ENCODE measurements at regions of chr14 and their contacts with region 1.

Region 1: GRCh38 chr14:75132382-75133086 is 5.7 kb upstream of the NEK9 start:
- DNase-seq: peak; percentile 71
- H3K4me3 ChIP-seq: no peak overlapping the region
- H3K27ac ChIP-seq: peak overlapping the region; percentile 20
- H3K4me1 ChIP-seq: peaks cover 16% of the 10 kb centered on the region
- H3K27me3 ChIP-seq: no peaks in the 10 kb centered on the region
- CTCF ChIP-seq: peak; percentile 69 to 71

Region 2: GRCh38 chr14:74875941-74876913 is 256.3 kb before region 1 on chr14 and contains the start of gene PROX2:
- CTCF ChIA-PET with region 1: no interaction called
- dilution Hi-C with region 1: no loop called
- in situ Hi-C with region 1: no loop called
- intact Hi-C with region 1: no loop called
- DNase-seq: no peak
- H3K4me3 ChIP-seq: no peak within 1 kb of the TSS
- H3K27ac ChIP-seq: no peak within 1 kb of the TSS
- H3K4me1 ChIP-seq: peaks cover 5% of the 10 kb centered on the region
- H3K27me3 ChIP-seq: no peaks in the 10 kb centered on the region
- CTCF ChIP-seq: no peak
- total RNA-seq, gene PROX2: not detected

Region 3: GRCh38 chr14:75119056-75119455 is 13.5 kb before region 1 on chr14:
- CTCF ChIA-PET with region 1: no interaction called
- dilution Hi-C with region 1: no loop called
- in situ Hi-C with region 1: no loop called
- intact Hi-C with region 1: no loop called
- DNase-seq: no peak
- H3K4me3 ChIP-seq: no peak overlapping the region
- H3K27ac ChIP-seq: no peak overlapping the region
- H3K4me1 ChIP-seq: peaks cover 4% of the 10 kb centered on the region
- H3K27me3 ChIP-seq: no peaks in the 10 kb centered on the region
- CTCF ChIP-seq: no peak

Region 4: DNA sequence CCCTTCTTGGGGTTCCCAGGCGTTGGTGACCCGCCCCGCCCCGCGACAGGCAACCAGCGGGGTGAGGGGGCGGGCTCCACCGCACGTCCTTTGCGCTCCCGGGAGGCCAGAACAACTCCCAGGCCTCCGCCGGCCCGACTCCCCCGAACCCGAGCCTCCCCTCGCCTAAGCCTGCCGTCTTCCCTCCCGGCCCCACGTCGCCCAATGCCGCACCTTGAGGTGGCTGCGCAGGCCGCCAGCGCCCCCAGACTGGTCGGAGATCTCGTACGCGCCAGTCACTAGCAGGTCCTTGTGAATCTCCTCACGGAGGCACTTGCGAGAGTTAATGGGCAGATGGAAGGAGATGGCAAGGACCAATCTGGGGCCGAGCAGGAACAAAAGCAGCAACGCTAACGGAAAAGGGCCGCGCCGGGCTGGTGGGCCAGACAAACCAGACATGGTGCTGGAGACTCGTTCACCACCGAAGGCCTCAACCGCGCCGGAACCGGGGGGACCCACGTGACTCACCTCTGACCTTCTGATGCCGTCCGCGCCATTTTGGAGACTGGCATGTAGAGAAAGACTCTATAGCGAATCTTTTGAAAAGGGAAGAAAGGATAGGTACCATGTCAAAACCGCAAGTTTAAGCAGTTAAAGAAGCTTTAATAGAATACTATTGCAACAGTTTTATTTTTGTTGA is 43.7 kb after region 1 on chr14 and contains the start of gene TMED10:
- CTCF ChIA-PET with region 1: no interaction called
- dilution Hi-C with region 1: no loop called
- in situ Hi-C with region 1: no loop called
- intact Hi-C with region 1: loop called (anchors 5 kb)
- DNase-seq: peak; percentile 84
- H3K4me3 ChIP-seq: peak within 1 kb of the TSS; percentile 60 to 87 (median 80)
- H3K27ac ChIP-seq: peak within 1 kb of the TSS; percentile 98
- H3K4me1 ChIP-seq: peaks cover 13% of the 10 kb centered on the region
- H3K27me3 ChIP-seq: no peaks in the 10 kb centered on the region
- CTCF ChIP-seq: no peak
- total RNA-seq, gene TMED10: 389 to 397 TPM

Region 5: GRCh38 chr14:75258615-75259466 is 126.3 kb after region 1 on chr14:
- CTCF ChIA-PET with region 1: interaction called, 3 read pairs
- dilution Hi-C with region 1: no loop called
- in situ Hi-C with region 1: no loop called
- intact Hi-C with region 1: loop called (anchors 1 kb)
- DNase-seq: peak; percentile 100
- H3K4me3 ChIP-seq: peak overlapping the region; percentile 0 to 37 (median 27)
- H3K27ac ChIP-seq: peak overlapping the region; percentile 97
- H3K4me1 ChIP-seq: peaks cover 52% of the 10 kb centered on the region
- H3K27me3 ChIP-seq: no peaks in the 10 kb centered on the region
- CTCF ChIP-seq: no peak

Region 6: DNA sequence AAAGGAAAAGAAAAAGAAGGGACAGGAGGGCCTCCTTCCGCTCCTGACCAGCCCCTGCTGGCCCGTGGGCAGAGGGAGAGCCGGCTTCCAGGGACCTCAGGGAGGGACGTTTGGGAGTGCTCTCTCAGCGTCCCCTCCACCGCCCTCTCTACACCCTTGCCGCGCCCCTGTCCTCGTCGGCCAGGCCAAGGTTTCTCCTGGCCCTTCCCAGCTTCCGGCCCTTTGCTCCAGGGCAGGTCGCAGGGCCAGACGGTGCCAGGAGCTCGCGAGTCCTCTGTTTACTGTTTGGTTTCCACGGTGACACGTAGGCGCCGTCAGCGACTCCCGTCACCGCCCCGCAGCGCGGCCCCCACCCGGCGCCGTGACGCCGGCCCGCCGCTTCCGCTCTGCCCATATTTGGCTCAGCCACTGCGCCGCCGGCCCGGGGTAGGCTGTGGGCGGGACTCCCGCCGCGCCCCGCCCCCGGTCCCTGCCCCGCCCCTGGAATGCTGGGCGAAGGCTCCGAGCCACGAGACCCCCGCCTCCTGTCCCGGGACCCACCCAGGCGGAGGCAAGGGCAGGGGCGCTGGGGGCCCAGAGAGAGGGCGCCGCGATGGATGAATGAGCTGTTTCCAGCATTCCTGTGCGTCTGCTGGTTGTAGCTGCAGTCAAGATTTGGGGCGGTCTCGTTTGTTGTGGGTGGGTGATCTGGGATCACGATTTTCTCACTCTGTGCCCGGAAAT is 161.5 kb after region 1 on chr14:
- CTCF ChIA-PET with region 1: no interaction called
- dilution Hi-C with region 1: no loop called
- in situ Hi-C with region 1: loop called (anchors 5 kb)
- intact Hi-C with region 1: loop called (anchors 1 kb)
- DNase-seq: peak; percentile 95
- H3K4me3 ChIP-seq: peak overlapping the region; percentile 73 to 86 (median 80)
- H3K27ac ChIP-seq: peak overlapping the region; percentile 99
- H3K4me1 ChIP-seq: peaks cover 32% of the 10 kb centered on the region
- H3K27me3 ChIP-seq: no peaks in the 10 kb centered on the region
- CTCF ChIP-seq: peak in 1 of 2 donors; percentile 3

Region 7: DNA sequence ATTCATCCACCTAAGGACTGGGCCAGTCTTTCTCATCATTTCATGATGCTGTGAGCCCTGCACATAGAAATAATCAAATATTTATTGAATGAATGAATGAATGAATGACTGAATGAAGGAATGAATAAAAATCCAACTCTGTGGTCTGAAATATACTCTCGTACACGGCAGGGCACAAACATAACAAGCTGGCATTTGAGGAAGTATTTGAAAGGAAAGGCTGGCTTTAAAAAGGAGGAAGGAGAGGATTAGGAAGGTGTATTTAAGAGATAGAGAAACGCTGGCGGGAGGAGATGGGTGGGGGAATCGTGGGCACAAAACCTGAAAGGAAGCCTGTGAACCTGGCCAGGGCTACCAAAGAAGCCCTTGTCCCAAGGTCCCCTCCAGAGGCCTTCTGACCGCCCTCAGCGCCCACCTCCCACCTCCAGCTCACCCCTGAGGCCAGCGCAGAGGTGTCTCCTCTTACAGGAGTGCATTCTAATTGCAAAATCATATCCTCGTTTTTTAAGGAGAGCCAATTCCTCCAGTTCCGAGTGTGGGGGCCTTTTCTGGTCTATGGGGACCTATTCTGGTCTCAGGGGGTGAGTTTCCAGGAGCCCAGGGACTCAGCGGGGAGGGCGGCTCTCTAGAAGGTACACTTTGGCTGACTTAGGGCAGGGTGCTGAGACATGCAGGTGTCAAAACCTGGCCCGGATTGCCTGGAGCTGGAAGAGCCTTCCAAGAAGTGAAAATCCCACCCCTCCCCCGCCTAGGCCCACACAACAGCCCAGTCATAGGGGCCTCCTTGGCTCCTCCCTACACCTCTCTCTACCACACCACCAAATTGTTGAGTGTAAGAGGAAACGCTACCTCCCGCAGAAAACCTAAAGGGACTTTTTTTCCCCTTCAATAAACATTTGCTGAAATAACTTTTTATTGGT is 286.6 kb after region 1 on chr14:
- CTCF ChIA-PET with region 1: no interaction called
- dilution Hi-C with region 1: no loop called
- in situ Hi-C with region 1: no loop called
- intact Hi-C with region 1: no loop called
- DNase-seq: no peak
- H3K4me3 ChIP-seq: no peak overlapping the region
- H3K27ac ChIP-seq: no peak overlapping the region
- H3K4me1 ChIP-seq: no peaks in the 10 kb centered on the region
- H3K27me3 ChIP-seq: no peaks in the 10 kb centered on the region
- CTCF ChIP-seq: no peak

Region 8: DNA sequence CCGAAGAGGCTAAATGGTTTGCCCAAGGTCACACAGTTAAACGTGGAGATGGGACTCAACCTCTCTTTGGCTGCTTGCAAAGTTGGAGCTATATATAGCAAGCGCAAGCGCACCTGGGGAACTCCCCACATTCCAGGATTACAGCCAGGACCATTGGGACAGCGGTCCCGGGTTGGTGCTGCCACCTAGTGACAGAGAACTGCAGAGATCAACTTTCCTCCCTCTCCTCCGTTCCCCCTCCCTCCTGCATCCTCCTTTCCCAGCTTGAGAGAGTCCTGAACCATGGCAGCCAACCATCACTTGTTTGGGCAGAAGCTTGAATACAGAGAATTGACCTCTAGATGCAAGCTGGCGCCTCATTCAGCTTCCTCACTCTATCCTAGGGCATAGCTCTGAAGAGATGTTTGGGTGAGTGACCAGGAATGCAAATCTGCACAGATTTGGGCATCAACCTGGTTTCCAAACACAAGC is 428.5 kb after region 1 on chr14:
- CTCF ChIA-PET with region 1: no interaction called
- dilution Hi-C with region 1: loop called (anchors 5 kb)
- in situ Hi-C with region 1: loop called in 1 of 2 experiments (anchors 10 kb)
- intact Hi-C with region 1: loop called (anchors 5 kb)
- DNase-seq: peak; percentile 86
- H3K4me3 ChIP-seq: no peak overlapping the region
- H3K27ac ChIP-seq: no peak overlapping the region
- H3K4me1 ChIP-seq: peaks cover 16% of the 10 kb centered on the region
- H3K27me3 ChIP-seq: no peaks in the 10 kb centered on the region
- CTCF ChIP-seq: peak; percentile 91 to 97

Measured in mammary epithelial cell (primary cell).